ENCODE measurements at regions of chr5 and their contacts with region 1.

Region 1: GRCh38 chr5:16552666-16553343 is 64.0 kb downstream of the RETREG1 start:
- DNase-seq: peak; percentile 62 to 93 (median 82)

Region 2: GRCh38 chr5:16427587-16427986 is 125.2 kb before region 1 on chr5:
- intact Hi-C with region 1: no loop called
- DNase-seq: peak; percentile 11 to 86 (median 48)

Region 3: GRCh38 chr5:16489322-16489791 is 63.4 kb before region 1 on chr5:
- intact Hi-C with region 1: loop called (anchors 10 kb)
- DNase-seq: peak in 17 of 42 donors; percentile 27 to 74 (median 48)